ENCODE measurements at regions of chr9 and their contacts with region 1.

Region 1: GRCh38 chr9:115013998-115014397 is 83.6 kb upstream of the TNFSF8 start:
- DNase-seq: peak; percentile 84

Region 2: DNA sequence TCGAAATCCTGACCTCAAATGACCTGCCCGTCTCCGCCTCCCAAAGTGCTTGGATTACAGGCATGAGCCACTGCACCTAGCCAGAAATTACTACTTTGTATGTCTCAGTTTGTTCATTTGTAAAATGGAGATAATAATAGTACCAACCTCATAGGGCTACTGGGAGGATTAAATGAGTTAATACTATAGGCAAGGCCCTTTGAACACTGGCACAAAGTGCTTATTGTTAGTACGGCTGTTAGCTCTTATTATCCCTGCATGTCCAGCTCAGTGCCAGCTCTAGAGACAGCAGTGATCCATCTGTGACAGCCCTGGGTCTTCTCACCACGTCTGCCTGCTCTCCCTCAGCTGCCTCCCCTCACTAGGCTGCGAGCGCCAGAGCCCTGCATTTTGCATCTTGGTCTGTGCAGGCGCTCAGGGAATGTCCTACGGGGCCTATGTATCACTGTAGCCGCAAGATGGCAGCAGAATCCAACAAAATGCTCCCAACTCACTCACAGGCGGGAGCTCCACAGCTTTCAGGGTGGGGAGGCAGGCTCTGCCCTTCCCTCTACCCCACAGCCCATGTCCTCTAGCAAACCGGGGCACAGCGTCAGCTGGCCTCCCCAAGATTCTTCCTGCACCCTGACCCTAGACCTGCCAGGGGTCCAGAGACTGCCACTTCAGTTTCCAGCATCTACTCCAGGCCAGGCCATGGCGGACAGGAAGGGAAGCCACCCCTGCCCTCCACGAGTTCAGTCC is 608.5 kb before region 1 on chr9:
- intact Hi-C with region 1: loop called (anchors 5 kb)
- DNase-seq: peak; percentile 86

Region 3: DNA sequence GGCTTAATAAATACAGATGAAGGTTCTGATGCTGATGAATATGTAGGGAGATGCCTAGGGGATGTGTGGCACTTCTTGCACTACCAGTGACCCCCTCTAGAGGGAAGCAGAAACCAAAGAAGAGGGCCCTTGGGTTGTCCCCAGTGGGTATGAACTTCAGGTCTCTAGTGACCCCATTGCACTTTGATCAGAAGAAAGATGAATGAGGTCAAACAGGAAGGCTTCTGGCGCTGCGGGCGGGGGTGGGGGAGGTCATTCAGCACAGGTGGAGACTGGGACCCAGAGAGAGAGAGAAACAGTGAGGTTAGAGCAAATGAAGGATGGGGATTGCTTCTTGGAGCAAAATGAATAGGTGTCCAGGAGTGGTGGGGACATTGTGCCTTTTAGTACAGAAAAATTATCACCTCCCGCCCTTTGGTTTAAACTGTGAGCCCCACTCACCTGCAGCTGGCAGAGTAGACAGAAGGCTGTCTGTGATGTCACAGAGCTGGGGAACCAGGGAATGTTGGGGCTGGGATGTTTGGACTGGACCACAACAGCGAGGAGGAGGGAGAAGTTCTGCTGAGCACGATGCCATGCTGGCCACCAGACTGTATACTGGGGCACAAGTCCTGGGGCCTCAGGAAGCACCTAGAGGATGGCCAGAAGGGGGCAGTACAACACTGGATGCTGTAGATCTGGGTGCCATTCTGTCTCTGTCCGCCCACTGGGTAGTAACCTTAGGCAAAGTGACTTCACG is 332.2 kb before region 1 on chr9 and contains the start of gene TEX48:
- intact Hi-C with region 1: loop called (anchors 5 kb)
- DNase-seq: no peak
- total RNA-seq, gene TEX48: not detected

Region 4: DNA sequence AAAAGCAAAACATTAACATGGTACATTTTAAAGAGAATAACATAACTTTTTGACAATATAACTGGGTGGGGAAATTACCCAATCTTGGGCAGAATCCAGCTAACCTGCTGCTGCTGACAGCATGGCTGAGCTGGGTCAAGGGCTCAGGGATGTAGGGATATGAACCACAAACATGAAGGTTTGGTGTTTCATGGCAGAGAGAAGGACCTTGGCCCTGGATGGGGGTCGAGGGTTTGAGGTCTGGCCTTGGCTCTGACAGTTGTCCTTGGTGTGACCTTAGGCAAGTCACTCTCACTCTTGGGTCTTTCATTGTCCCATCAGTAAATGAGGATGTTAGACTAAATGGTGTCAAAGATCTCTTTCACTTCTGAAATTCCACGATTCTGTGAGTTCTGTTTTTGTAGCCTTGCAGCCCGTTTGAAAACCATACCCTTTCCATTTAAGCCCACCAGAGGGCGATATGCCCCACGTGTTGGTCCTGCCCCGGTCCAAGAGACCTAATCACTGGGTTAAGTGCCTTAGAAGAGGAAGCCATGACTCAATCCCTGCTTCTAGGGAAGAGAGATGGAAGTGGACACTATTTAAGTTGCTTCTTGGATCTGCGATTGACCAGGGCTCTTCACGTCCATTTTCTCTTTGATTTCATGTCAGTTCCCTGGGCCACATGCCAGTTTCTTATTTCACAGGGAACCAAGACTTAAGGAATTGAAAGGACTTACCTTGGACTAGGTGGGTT is 275.2 kb before region 1 on chr9:
- intact Hi-C with region 1: loop called (anchors 5 kb)
- DNase-seq: peak; percentile 89

Region 5: GRCh38 chr9:114938687-114939575 is 75.1 kb before region 1 on chr9:
- intact Hi-C with region 1: no loop called
- DNase-seq: no peak

Measured in cardiac septum (tissue), 1 donor.